ENCODE measurements at regions of chr6 and their contacts with region 1.

Region 1: DNA sequence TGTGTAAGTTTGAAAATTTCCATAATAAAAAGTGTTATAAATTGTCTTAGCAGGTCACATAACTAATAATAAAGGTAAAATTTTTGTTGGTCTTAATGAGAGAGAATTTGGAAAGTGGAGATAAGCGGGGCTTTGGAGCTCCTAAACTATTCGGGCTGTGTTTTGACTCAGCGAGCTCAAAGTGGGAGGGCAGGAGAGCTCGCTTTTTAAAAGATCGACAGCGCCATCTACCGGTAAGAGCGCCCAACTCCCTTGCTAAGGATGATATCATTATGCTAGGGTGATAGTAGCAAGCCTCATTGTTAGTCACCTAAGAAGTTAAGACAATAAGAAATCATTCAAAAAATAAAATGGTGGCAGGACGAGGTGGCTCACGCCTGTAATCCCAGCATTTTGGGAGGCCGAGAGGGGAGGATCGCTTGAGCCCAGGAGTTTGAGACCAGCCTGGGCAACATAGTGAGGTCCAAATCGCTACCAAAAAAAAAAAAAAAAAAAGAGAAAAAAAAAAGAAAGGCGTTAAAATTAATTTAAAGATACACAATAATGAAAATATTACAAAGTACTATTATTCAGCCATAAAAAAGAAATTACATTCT is 24.8 kb downstream of the C6orf15 start:
- DNase-seq: peak; percentile 25
- ATAC-seq: peak; percentile 98
- H3K4me3 ChIP-seq: no peak overlapping the region
- H3K27ac ChIP-seq: no peak overlapping the region
- H3K4me1 ChIP-seq: no peaks in the 10 kb centered on the region
- H3K27me3 ChIP-seq: no peaks in the 10 kb centered on the region; a peak in 1 of 4 replicates
- CTCF ChIP-seq: peak; percentile 67 to 72 (median 71)
- EP300 ChIP-seq: no peak
- POLR2A ChIP-seq: no peak
- RAD21 ChIP-seq: peak; percentile 71

Region 2: GRCh38 chr6:30194797-30195690 is 892.5 kb before region 1 on chr6:
- CTCF ChIA-PET with region 1: no interaction called
- POLR2A ChIA-PET with region 1: no interaction called
- RAD21 ChIA-PET with region 1: no interaction called
- SMC1A ChIA-PET with region 1: no interaction called
- in situ Hi-C with region 1: no loop called
- intact Hi-C with region 1: no loop called
- DNase-seq: no peak
- ATAC-seq: no peak; the same call in 1 of the 3 replicates
- H3K4me3 ChIP-seq: no peak overlapping the region
- H3K27ac ChIP-seq: no peak overlapping the region
- H3K4me1 ChIP-seq: no peaks in the 10 kb centered on the region
- H3K27me3 ChIP-seq: no peaks in the 10 kb centered on the region
- CTCF ChIP-seq: no peak
- EP300 ChIP-seq: no peak
- POLR2A ChIP-seq: no peak
- RAD21 ChIP-seq: no peak

Region 3: DNA sequence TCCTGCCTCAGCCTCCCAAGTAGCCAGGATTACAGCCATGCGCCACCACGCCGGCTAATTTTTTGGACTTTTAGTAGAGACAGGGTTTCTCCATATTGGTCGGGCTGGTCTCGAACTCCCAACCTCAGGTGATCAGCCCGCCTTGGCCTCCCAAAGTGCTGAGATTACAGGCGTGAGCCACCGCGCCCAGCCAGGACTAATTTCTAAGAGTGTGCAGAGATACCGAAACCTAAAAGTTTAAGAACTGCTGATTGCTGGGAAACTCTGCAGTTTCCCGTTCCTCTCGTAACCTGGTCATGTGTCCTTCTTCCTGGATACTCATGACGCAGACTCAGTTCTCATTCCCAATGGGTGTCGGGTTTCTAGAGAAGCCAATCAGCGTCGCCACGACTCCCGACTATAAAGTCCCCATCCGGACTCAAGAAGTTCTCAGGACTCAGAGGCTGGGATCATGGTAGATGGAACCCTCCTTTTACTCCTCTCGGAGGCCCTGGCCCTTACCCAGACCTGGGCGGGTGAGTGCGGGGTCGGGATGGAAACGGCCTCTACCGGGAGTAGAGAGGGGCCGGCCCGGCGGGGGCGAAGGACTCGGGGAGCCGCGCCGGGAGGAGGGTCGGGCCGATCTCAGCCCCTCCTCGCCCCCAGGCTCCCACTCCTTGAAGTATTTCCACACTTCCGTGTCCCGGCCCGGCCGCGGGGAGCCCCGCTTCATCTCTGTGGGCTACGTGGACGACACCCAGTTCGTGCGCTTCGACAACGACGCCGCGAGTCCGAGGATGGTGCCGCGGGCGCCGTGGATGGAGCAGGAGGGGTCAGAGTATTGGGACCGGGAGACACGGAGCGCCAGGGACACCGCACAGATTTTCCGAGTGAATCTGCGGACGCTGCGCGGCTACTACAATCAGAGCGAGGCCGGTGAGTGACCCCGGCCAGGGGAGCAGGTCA is 598.2 kb before region 1 on chr6 and contains the start of gene HLA-E:
- CTCF ChIA-PET with region 1: interaction called, 3 read pairs
- POLR2A ChIA-PET with region 1: no interaction called
- RAD21 ChIA-PET with region 1: no interaction called
- SMC1A ChIA-PET with region 1: no interaction called
- in situ Hi-C with region 1: no loop called
- intact Hi-C with region 1: loop called (anchors 10 kb)
- DNase-seq: peak; percentile 99
- ATAC-seq: peak; percentile 87
- H3K4me3 ChIP-seq: peak within 1 kb of the TSS; percentile 94
- H3K27ac ChIP-seq: peak within 1 kb of the TSS; percentile 93
- H3K4me1 ChIP-seq: peaks cover 18% of the 10 kb centered on the region
- H3K27me3 ChIP-seq: no peaks in the 10 kb centered on the region
- CTCF ChIP-seq: no peak
- EP300 ChIP-seq: no peak
- POLR2A ChIP-seq: peak; percentile 94
- RAD21 ChIP-seq: no peak
- polyA plus RNA-seq, gene HLA-E: 35.1 to 62.3 TPM

Region 4: GRCh38 chr6:30828027-30828960 is 259.3 kb before region 1 on chr6:
- CTCF ChIA-PET with region 1: interaction called, 24 read pairs
- POLR2A ChIA-PET with region 1: no interaction called
- RAD21 ChIA-PET with region 1: interaction called, 15 read pairs
- SMC1A ChIA-PET with region 1: interaction called, 7 read pairs
- in situ Hi-C with region 1: no loop called
- intact Hi-C with region 1: loop called (anchors 1 kb)
- DNase-seq: no peak
- ATAC-seq: peak; percentile 94
- H3K4me3 ChIP-seq: no peak overlapping the region
- H3K27ac ChIP-seq: no peak overlapping the region
- H3K4me1 ChIP-seq: peaks cover 16% of the 10 kb centered on the region
- H3K27me3 ChIP-seq: no peaks in the 10 kb centered on the region
- CTCF ChIP-seq: peak; percentile 88 to 97 (median 90); a peak in 5 of 6 replicates
- EP300 ChIP-seq: no peak
- POLR2A ChIP-seq: no peak
- RAD21 ChIP-seq: peak; percentile 99

Region 5: GRCh38 chr6:31058128-31058894 is 29.3 kb before region 1 on chr6:
- CTCF ChIA-PET with region 1: interaction called, 23 read pairs
- POLR2A ChIA-PET with region 1: no interaction called
- RAD21 ChIA-PET with region 1: interaction called, 4 read pairs
- SMC1A ChIA-PET with region 1: interaction called, 3 read pairs
- in situ Hi-C with region 1: no loop called
- intact Hi-C with region 1: no loop called
- DNase-seq: no peak
- ATAC-seq: peak; percentile 68
- H3K4me3 ChIP-seq: no peak overlapping the region
- H3K27ac ChIP-seq: no peak overlapping the region
- H3K4me1 ChIP-seq: no peaks in the 10 kb centered on the region
- H3K27me3 ChIP-seq: no peaks in the 10 kb centered on the region; a peak in 1 of 4 replicates
- CTCF ChIP-seq: peak; percentile 42 to 57 (median 53)
- EP300 ChIP-seq: no peak
- POLR2A ChIP-seq: no peak
- RAD21 ChIP-seq: no peak

Region 6: DNA sequence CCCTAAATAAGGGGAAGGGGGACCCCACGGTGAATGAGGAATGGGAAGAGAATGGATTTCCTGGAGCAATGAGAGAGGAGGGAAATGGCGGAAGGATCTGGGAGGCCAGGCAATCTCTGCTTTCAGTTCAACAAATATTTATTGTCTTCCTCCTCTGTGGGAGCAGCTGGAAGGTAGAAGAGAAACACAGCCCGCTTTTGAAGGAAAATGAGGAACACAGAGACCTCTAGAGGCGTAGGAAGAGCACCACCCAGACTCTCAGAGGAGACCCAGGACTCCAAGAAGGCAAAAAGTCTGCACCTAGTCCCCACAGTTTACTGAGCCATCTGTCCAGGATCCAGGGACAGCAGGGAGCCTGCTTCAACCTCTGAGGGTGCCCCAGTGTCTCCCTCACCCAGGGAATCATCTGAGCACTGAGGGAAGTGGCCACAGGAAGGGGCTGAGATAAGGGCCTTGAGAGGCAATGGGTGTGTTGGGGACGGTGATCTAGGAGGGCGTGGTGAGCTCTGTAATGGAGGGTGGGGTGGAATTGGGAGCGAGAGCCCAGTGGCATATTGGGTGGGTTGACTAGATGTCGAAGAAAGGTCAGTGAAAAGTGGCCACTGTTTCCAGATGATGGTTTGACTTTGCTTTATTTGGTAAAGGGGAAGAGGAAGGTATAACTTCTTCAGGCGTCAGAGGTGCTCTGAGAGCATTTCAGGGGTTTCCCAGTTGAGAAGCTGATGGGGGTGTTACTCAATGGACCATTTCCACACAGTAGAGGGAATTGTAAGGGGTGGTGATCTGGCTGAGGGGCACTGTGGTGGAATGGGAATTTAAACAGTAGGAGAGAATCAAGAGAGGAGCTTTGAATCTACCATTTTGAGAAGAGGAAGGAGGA is 27.6 kb after region 1 on chr6:
- CTCF ChIA-PET with region 1: interaction called, 11 read pairs
- POLR2A ChIA-PET with region 1: no interaction called
- RAD21 ChIA-PET with region 1: interaction called, 3 read pairs
- SMC1A ChIA-PET with region 1: interaction called, 3 read pairs
- in situ Hi-C with region 1: no loop called
- intact Hi-C with region 1: no loop called
- DNase-seq: no peak
- ATAC-seq: peak; percentile 21; the same call in 2 of the 3 replicates
- H3K4me3 ChIP-seq: no peak overlapping the region
- H3K27ac ChIP-seq: no peak overlapping the region
- H3K4me1 ChIP-seq: no peaks in the 10 kb centered on the region
- H3K27me3 ChIP-seq: peaks cover 3 to 4% of the 10 kb centered on the region in 2 experiments; a peak in 3 of 4 replicates
- CTCF ChIP-seq: 0 out of 6 replicates have a peak, but pooled peaks of 1 of the 3 experiments have one; percentile 15
- EP300 ChIP-seq: no peak
- POLR2A ChIP-seq: no peak
- RAD21 ChIP-seq: no peak

Region 7: GRCh38 chr6:31197559-31198305 is 110.1 kb after region 1 on chr6:
- CTCF ChIA-PET with region 1: interaction called, 18 read pairs
- POLR2A ChIA-PET with region 1: no interaction called
- RAD21 ChIA-PET with region 1: no interaction called
- SMC1A ChIA-PET with region 1: interaction called, 4 read pairs
- in situ Hi-C with region 1: no loop called
- intact Hi-C with region 1: no loop called
- DNase-seq: peak; percentile 69
- ATAC-seq: peak; percentile 84
- H3K4me3 ChIP-seq: peak overlapping the region; percentile 87
- H3K27ac ChIP-seq: peak overlapping the region; percentile 97
- H3K4me1 ChIP-seq: peaks cover 15% of the 10 kb centered on the region
- H3K27me3 ChIP-seq: no peaks in the 10 kb centered on the region
- CTCF ChIP-seq: no peak
- EP300 ChIP-seq: peak; percentile 31 to 54; a peak in 2 of 4 replicates
- POLR2A ChIP-seq: peak; percentile 87
- RAD21 ChIP-seq: 0 out of 2 replicates have a peak, but pooled peaks have one; percentile 12

Measured in GM12878 (cell line).